ENCODE measurements at regions of chr6 and their contacts with region 1.

Region 1: DNA sequence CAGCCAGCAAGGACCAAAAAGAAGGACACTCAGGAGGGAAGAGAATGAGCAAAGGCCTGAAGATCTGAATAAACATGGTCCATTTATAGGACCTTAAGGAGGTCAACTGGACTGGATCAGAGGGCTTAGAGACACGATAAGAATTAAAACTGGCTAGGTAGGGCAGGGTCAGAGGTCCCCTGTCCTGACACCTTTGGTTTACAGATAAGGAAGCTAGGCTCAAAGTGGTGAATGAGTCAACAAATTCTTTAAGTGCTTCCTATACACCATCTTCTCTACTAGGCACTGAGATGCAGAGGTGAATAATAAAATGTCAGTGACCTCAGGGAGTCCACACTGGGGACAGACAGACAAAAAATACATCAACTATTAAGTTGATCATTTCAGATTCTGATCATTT is 70.3 kb downstream of the HIVEP2 start:
- DNase-seq: peak; percentile 60 to 72
- H3K4me3 ChIP-seq: no peak overlapping the region
- H3K4me3 Mint-ChIP-seq: no peak overlapping the region
- H3K27ac Mint-ChIP-seq: peak overlapping the region; percentile 14
- H3K4me1 ChIP-seq: peaks cover 20% of the 10 kb centered on the region
- H3K4me1 Mint-ChIP-seq: peaks cover 21% of the 10 kb centered on the region
- H3K27me3 ChIP-seq: no peaks in the 10 kb centered on the region
- H3K27me3 Mint-ChIP-seq: peaks cover 6% of the 10 kb centered on the region
- CTCF ChIP-seq: no peak

Region 2: GRCh38 chr6:142642651-142643050 is 232.0 kb before region 1 on chr6:
- CTCF ChIA-PET with region 1: no interaction called
- POLR2A ChIA-PET with region 1: no interaction called
- intact Hi-C with region 1: no loop called
- DNase-seq: no peak
- H3K4me3 ChIP-seq: no peak overlapping the region
- H3K4me3 Mint-ChIP-seq: no peak overlapping the region
- H3K27ac Mint-ChIP-seq: no peak overlapping the region
- H3K4me1 ChIP-seq: no peaks in the 10 kb centered on the region
- H3K4me1 Mint-ChIP-seq: no peaks in the 10 kb centered on the region
- H3K27me3 ChIP-seq: no peaks in the 10 kb centered on the region
- H3K27me3 Mint-ChIP-seq: no peaks in the 10 kb centered on the region
- CTCF ChIP-seq: no peak

Region 3: DNA sequence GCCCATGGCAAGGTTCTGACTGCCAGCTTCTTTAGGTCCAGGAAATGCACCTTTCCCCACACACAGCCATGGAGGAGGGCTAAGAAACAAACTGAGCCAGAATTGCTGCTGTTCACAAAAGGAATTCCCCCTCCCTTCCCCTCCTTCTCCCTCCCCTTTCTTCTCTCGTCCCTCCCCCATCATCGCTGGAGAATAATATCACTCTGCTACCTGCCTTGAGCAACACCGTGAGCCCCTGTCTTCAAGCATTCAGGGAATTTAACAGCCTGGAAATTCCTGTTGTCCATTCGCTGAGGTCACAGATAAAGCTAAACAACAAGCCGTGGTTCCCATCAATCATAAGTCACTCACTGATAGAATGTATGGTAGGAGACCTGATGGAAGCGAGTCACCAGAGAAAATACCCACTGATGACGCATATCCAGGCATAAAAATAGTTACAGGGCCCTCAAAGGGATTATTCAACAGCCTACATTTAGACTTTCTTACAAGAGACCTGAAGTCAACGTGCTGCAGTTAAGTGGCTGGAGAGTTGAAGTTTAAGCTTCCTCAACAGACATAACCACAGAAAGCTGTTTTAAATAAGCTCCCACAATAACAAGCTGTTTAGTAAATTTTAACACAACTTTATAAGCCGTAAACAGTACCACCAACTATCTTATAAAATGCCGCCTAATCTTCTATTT is 10.6 kb after region 1 on chr6:
- CTCF ChIA-PET with region 1: no interaction called
- POLR2A ChIA-PET with region 1: no interaction called
- intact Hi-C with region 1: loop called (anchors 1 kb)
- DNase-seq: peak; percentile 76 to 87
- H3K4me3 ChIP-seq: no peak overlapping the region
- H3K4me3 Mint-ChIP-seq: peak overlapping the region; percentile 60
- H3K27ac Mint-ChIP-seq: peak overlapping the region; percentile 65
- H3K4me1 ChIP-seq: peaks cover 34% of the 10 kb centered on the region
- H3K4me1 Mint-ChIP-seq: peaks cover 13% of the 10 kb centered on the region
- H3K27me3 ChIP-seq: no peaks in the 10 kb centered on the region
- H3K27me3 Mint-ChIP-seq: peaks cover 5% of the 10 kb centered on the region
- CTCF ChIP-seq: no peak

Measured in Caco-2 (cell line).